WTC11 (cell line): ENCODE measurements at regions of chr22 and their contacts with region 1.

Region 1: DNA sequence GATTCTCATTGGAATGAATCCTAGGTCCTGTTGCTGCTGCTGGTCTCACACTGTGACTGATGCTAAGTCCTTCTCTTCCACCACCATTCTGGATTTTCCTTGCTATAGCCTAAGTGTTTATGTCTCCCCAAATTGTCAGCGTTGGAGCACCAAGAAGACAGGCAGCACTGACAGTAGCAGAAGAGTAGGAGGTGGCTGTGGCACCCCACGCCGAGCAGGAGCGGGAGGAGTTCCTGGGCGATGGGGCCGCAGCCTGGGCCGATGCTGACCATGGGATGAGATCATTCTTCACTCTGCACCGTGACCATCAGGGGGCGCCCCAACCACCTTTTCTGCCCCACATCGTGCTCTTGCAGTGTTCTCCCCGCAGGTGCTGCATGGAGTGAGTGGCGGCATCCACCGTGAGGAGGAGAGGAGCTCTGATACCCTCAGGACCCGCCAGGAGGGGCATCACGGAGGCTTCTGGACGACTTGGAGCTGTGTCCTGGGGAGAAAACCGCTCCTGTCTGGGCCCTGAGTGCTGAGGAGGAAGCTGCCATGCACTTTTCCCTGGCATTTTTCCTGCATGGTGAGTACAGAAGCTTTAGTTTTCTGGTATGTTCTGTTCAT is 57.0 kb downstream of the LRRC74B start:
- DNase-seq: peak; percentile 95
- ATAC-seq: peak; percentile 99
- H3K4me3 Mint-ChIP-seq: peak overlapping the region; percentile 51
- H3K27ac Mint-ChIP-seq: no peak overlapping the region
- H3K4me1 Mint-ChIP-seq: peaks cover 22% of the 10 kb centered on the region
- H3K27me3 Mint-ChIP-seq: peaks cover 21% of the 10 kb centered on the region
- CTCF ChIP-seq: peak; percentile 82

Region 2: GRCh38 chr22:20981787-20982562 is 120.8 kb before region 1 on chr22 and contains the start of gene LZTR1:
- CTCF ChIA-PET with region 1: interaction called, 14 read pairs
- POLR2A ChIA-PET with region 1: no interaction called
- DNase-seq: peak; percentile 81
- ATAC-seq: peak; percentile 69
- H3K4me3 Mint-ChIP-seq: peak within 1 kb of the TSS; percentile 96
- H3K27ac Mint-ChIP-seq: peak within 1 kb of the TSS; percentile 85
- H3K4me1 Mint-ChIP-seq: peaks cover 30% of the 10 kb centered on the region
- H3K27me3 Mint-ChIP-seq: peaks cover 32% of the 10 kb centered on the region
- CTCF ChIP-seq: no peak
- total RNA-seq, gene LZTR1: 38.3 to 44.5 TPM (median 40.1 TPM) in 3 replicates

Region 3: DNA sequence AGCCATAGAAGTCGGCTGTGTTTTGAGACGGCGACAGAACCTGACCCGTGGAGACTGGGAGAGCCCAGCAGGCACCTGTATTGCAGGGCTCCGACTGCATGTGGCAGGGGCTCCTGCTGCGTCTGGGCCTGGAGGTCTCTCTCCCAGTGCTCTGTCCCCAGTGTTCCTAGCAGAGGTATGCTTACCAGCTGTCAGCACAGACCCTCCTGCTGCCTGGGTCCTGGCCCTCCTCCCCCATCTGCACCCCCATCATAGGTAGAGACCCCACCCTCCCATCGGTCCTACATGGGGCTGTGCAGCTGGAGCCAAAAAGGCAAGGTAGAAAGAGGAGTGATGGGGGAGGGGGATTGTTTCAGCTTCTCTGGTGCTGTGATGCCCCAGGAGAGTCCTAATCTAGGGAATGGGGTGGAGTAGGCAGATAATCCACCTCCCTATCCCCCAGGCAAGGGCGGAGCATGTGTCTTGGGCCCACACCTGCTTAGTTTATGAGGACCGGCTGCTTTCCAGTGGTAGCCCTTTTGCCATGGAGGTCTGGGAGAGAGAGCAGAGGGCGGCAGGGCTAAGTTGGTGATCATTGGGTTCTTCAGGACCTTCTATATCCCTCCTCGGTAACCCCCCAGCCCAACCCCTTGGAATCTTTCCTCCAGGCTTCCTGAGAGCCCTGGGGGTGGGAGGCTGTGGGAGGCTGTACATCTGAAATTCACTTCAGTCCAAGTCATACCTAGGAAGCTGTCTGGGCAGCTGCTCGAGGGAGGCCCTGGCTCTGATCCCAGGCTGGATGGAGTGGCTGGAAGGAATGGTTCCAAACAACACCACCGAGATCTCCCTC is 75.8 kb before region 1 on chr22:
- CTCF ChIA-PET with region 1: interaction called, 55 read pairs
- POLR2A ChIA-PET with region 1: no interaction called
- DNase-seq: no peak
- ATAC-seq: no peak
- H3K4me3 Mint-ChIP-seq: no peak overlapping the region
- H3K27ac Mint-ChIP-seq: no peak overlapping the region
- H3K4me1 Mint-ChIP-seq: peaks cover 6% of the 10 kb centered on the region
- H3K27me3 Mint-ChIP-seq: peaks cover 17% of the 10 kb centered on the region
- CTCF ChIP-seq: no peak

Region 4: GRCh38 chr22:21051493-21052415 is 51.0 kb before region 1 on chr22:
- CTCF ChIA-PET with region 1: interaction called, 15 read pairs
- POLR2A ChIA-PET with region 1: no interaction called
- DNase-seq: no peak
- ATAC-seq: peak; percentile 54
- H3K4me3 Mint-ChIP-seq: peak overlapping the region; percentile 29; the same call in 1 of the 2 replicates
- H3K27ac Mint-ChIP-seq: peak overlapping the region; percentile 76
- H3K4me1 Mint-ChIP-seq: peaks cover 38% of the 10 kb centered on the region
- H3K27me3 Mint-ChIP-seq: no peaks in the 10 kb centered on the region; the same call in 1 of the 2 replicates
- CTCF ChIP-seq: no peak